Heart right ventricle (tissue), 16 donors: ENCODE measurements at regions of chr1 and their contacts with region 1.

Region 1: DNA sequence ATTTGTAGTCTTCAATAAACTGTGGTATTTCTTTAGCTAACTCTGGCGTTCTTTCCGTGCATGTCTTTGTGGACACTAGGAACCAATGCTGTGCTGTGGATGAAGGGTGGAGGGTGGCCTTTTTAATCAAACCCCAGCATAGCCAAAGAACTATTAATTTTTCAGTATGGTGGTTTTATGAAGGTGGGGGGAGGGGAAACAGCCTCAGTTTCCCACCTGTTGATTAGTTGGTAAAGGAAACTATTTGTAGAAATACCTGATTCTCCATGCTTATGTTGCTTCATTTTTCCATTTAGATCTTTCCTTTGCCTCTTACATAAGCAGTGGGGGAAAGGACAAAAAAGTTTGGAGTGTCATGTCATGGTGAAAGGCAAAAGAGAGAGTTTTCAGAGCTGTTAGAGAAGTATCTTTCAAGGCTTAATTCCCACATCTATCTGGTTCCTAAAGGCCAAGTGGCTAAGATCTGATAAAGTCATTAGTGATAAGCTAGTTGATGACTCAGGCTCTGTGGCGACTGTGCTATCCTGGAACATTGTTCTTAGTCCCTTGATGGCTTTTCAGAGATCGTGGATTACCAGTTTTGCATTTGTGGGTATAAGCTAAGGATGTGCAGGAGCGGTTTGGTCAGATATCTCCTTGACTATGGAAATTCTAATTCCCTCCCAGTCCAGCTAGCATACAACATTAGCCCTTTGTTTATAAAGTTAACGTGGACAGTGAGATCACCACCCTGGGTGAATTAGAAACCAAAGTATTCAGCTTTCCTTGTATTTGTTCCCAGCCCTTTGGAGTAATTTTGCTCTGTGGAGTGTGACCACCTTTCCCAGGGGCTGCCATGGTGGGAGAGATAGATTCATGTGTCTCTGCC is 8.7 kb upstream of the HAX1 start:
- DNase-seq: no peak
- ATAC-seq: peak in 1 of 8 donors; percentile 17
- H3K4me3 ChIP-seq: no peak overlapping the region
- H3K27ac ChIP-seq: peak overlapping the region in 2 of 10 donors; percentile 7 to 19
- H3K4me1 ChIP-seq: peaks cover 0 to 14% (median 4%) of the 10 kb centered on the region in 9 donors
- H3K27me3 ChIP-seq: no peaks in the 10 kb centered on the region
- CTCF ChIP-seq: no peak

Region 2: DNA sequence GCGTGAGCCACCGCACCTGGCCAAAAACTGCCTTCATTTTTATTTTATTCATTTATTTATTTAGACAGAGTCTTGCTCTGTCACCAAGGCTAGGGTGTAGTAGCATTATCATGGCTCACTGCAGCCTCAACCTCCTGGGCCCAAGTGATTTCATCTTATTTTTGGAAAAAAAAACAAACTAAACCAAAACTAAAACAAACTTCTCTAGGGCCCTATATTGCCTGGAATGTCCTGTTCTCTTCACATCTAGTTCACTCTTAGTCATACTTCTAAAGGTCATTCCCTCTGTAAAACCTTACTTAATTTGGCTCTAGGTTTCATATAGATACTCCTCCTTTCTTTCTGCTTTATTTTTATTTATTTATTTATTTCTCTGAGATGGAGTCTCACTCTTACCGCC is 257.6 kb before region 1 on chr1:
- intact Hi-C with region 1: loop called in 1 of 10 experiments (anchors 10 kb)
- DNase-seq: no peak
- ATAC-seq: no peak
- H3K4me3 ChIP-seq: no peak overlapping the region
- H3K27ac ChIP-seq: no peak overlapping the region
- H3K4me1 ChIP-seq: no peaks in the 10 kb centered on the region
- H3K27me3 ChIP-seq: no peaks in the 10 kb centered on the region
- CTCF ChIP-seq: no peak

Region 3: GRCh38 chr1:154206196-154206595 is 57.5 kb before region 1 on chr1 and contains the start of gene CFAP141:
- intact Hi-C with region 1: loop called in 2 of 10 experiments (anchors 10 kb)
- DNase-seq: no peak
- ATAC-seq: peak in 1 of 8 donors; percentile 17
- H3K4me3 ChIP-seq: no peak within 1 kb of the TSS
- H3K27ac ChIP-seq: no peak within 1 kb of the TSS
- H3K4me1 ChIP-seq: no peaks in the 10 kb centered on the region
- H3K27me3 ChIP-seq: no peaks in the 10 kb centered on the region
- CTCF ChIP-seq: no peak
- total RNA-seq, gene CFAP141: 0.76 to 1.1 (median 1.1) TPM in 3 of 10 donors, not detected in the others

Region 4: GRCh38 chr1:154558575-154559465 is 295.1 kb after region 1 on chr1 and contains the start of gene UBE2Q1:
- intact Hi-C with region 1: no loop called
- DNase-seq: peak; percentile 98 to 99
- ATAC-seq: peak; percentile 96 to 98 (median 97)
- H3K4me3 ChIP-seq: peak within 1 kb of the TSS; percentile 69 to 97 (median 93)
- H3K27ac ChIP-seq: peak within 1 kb of the TSS; percentile 77 to 98 (median 94)
- H3K4me1 ChIP-seq: peaks cover 13 to 39% (median 27%) of the 10 kb centered on the region in 9 donors
- H3K27me3 ChIP-seq: no peaks in the 10 kb centered on the region
- CTCF ChIP-seq: no peak
- total RNA-seq, gene UBE2Q1: 49.1 to 83.5 (median 59.0) TPM